ENCODE measurements at regions of chr7 and their contacts with region 1.

Region 1: DNA sequence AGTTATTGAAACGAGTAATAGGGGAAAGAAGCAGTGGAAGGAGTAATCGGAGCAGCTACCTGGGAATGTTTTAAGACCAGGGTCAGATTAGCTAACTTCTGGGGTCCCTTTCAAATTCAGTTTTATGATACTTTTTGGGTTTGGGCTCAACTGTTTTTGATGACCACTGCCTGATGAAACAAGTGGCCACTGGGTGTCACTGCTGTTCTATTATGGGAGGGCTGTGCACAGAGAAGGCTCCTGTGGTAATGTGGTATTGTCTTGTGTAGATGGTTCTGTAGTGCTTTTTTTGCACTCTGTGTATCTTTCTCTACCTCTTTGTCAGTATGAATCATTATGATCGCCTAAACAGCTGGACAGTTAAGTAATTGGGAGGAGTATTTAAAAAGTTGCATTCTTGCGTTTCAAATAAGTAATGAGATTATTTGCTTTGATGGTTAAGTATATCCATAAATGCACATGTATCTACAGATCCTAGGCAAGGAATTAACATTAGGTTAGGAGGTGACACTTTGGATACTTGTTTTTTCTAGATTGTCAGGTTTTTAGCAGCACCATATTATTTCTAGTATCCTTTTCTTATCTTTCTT is 128.4 kb downstream of the ABCA13 start:
- DNase-seq: no peak
- H3K4me3 Mint-ChIP-seq: no peak overlapping the region
- H3K27ac Mint-ChIP-seq: no peak overlapping the region
- H3K4me1 Mint-ChIP-seq: peaks cover 20% of the 10 kb centered on the region
- H3K27me3 Mint-ChIP-seq: peaks cover 6% of the 10 kb centered on the region

Region 2: DNA sequence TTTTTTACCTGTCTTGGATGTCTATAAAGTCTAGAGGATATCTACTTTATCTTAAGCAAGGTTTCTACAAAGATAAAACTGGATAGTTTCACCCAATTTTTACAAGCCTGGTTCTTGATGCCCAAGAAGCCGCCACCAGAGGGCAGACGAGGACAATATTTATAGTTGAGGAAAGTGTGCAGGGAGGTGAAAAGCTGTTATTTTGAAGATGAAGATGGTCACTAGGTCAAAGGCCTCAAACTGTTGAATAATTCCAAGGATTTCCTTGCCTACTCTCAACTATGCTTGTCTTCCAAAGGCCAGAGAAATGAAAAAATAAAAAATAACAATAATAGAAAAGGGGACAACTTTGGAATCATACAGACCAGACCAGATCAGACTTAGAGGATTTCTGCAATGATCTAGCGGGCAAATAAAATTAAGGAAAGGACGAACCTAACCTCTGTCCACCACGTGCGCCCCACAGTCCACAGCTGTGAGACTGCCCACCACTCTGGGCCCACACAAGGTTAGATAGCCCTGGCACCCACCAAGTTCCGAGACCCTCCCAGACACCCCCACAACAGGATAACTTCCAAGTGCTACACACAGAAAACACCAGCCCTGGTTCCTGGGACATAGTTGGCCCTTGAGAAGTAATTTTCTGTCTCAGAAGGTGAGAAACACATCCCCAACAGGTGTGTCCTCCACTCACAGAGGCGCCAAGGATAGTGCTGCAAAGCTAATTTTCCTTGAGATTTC is 354.2 kb before region 1 on chr7:
- intact Hi-C with region 1: loop called (anchors 10 kb)
- DNase-seq: peak; percentile 52
- H3K4me3 Mint-ChIP-seq: no peak overlapping the region
- H3K27ac Mint-ChIP-seq: no peak overlapping the region
- H3K4me1 Mint-ChIP-seq: peaks cover 11% of the 10 kb centered on the region
- H3K27me3 Mint-ChIP-seq: no peaks in the 10 kb centered on the region

Region 3: DNA sequence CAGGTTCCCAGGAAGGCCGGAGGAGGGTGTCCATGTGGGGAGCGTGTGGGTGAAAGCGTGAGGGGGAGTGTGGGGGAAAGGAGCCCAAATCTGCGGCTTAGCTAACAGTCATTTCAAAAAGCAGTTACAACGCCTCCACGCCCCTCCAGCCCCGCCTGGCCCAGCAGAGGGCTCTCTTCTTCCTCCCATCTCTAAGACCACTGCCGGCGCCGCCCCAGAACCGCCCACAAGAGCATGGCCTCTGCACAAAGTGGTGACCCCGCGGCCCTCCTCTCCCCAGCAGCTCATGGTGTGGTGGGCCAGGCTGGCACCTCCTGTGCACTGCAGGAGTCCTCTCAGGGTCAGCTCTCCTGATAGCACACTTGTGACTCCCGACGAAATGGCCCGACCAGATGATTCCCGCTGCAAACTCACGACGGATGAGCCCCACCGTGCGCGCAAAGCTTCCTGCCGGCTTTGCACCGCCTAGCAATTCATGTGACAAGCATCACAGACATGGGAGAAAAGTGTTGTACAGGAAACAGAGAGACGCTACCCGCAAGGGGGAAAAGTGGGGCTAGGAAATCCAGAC is 307.8 kb before region 1 on chr7:
- intact Hi-C with region 1: loop called (anchors 5 kb)
- DNase-seq: peak; percentile 84
- H3K4me3 Mint-ChIP-seq: peak overlapping the region; percentile 85
- H3K27ac Mint-ChIP-seq: peak overlapping the region; percentile 89
- H3K4me1 Mint-ChIP-seq: peaks cover 20% of the 10 kb centered on the region
- H3K27me3 Mint-ChIP-seq: peaks cover 1% of the 10 kb centered on the region

Region 4: GRCh38 chr7:48130658-48131108 is 169.0 kb before region 1 on chr7:
- intact Hi-C with region 1: loop called (anchors 1 kb)
- DNase-seq: no peak
- H3K4me3 Mint-ChIP-seq: no peak overlapping the region
- H3K27ac Mint-ChIP-seq: no peak overlapping the region
- H3K4me1 Mint-ChIP-seq: peaks cover 10% of the 10 kb centered on the region
- H3K27me3 Mint-ChIP-seq: peaks cover 17% of the 10 kb centered on the region

Region 5: DNA sequence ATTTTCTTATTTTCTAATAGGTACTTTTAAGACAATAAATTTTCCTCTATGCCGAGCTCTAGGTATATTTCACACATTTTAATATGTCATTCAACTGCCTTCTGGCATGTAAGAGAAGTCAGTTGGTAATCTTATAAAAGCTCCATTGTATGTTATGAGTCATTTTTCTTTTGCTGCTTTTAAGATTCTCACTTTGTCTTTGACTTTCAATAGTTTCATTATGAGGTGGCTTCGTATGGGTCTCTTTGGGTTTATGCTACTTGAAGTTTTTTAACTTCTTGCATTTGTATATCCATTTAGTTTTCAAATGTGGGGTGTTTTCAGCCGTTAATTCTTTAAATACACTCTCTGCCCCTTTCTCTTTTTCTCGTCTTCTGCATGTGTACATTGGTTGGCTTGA is 47.9 kb before region 1 on chr7:
- intact Hi-C with region 1: loop called (anchors 1 kb)
- DNase-seq: no peak
- H3K4me3 Mint-ChIP-seq: no peak overlapping the region
- H3K27ac Mint-ChIP-seq: peak overlapping the region; percentile 26
- H3K4me1 Mint-ChIP-seq: peaks cover 30% of the 10 kb centered on the region
- H3K27me3 Mint-ChIP-seq: peaks cover 3% of the 10 kb centered on the region

Region 6: GRCh38 chr7:48389977-48390376 is 90.3 kb after region 1 on chr7:
- intact Hi-C with region 1: no loop called
- DNase-seq: no peak
- H3K4me3 Mint-ChIP-seq: no peak overlapping the region
- H3K27ac Mint-ChIP-seq: no peak overlapping the region
- H3K4me1 Mint-ChIP-seq: peaks cover 10% of the 10 kb centered on the region
- H3K27me3 Mint-ChIP-seq: peaks cover 6% of the 10 kb centered on the region

Region 7: DNA sequence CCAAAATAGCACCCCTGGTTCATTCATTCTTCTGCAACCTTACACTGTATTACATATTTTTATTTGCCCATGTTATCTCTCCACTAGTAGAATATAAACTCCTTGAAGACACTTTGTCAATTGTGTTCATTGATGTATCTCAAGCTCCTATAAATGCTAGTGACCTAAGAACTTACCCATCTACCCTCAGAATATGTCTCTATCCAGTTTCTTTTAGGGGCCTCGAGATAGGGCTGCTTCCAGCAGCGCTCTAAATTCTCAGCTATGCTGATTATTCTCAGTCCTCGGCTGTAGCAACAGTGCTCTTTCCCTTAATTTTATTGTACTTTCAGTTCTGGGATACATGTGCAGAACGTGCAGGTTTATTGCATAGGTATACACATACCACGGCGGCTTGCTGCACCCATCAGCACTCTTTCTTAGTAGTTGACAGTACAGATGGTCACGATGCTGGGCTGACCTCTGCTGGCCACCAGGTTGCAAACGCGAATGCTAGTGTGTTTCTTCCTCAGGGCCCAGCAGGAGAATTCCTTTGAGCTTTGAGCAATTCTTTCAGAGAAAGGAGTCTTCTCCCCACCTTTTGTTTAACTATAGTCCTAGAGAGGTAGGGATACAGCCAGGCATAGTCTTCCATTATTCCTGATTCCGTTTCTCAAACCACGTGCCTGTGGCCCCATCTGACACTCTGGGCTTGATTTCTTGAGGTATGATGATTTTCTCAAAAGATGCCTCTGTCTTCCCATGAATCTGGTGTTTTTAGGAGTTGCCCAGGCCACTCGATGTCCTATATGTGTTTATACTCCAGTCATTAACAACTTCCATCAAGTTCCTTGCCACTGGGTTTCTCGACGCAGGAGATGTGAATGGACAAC is 575.6 kb after region 1 on chr7:
- intact Hi-C with region 1: loop called (anchors 10 kb)
- DNase-seq: no peak
- H3K4me3 Mint-ChIP-seq: no peak overlapping the region
- H3K27ac Mint-ChIP-seq: no peak overlapping the region
- H3K4me1 Mint-ChIP-seq: no peaks in the 10 kb centered on the region
- H3K27me3 Mint-ChIP-seq: no peaks in the 10 kb centered on the region

Region 8: GRCh38 chr7:50068961-50069551 is 1769.4 kb after region 1 on chr7:
- intact Hi-C with region 1: loop called (anchors 2 kb)
- DNase-seq: peak; percentile 21
- H3K4me3 Mint-ChIP-seq: peak overlapping the region; percentile 82
- H3K27ac Mint-ChIP-seq: peak overlapping the region; percentile 44
- H3K4me1 Mint-ChIP-seq: peaks cover 19% of the 10 kb centered on the region
- H3K27me3 Mint-ChIP-seq: peaks cover 7% of the 10 kb centered on the region